Transverse colon (tissue), 4 donors: ENCODE measurements at regions of chr17 and their contacts with region 1.

Region 1: DNA sequence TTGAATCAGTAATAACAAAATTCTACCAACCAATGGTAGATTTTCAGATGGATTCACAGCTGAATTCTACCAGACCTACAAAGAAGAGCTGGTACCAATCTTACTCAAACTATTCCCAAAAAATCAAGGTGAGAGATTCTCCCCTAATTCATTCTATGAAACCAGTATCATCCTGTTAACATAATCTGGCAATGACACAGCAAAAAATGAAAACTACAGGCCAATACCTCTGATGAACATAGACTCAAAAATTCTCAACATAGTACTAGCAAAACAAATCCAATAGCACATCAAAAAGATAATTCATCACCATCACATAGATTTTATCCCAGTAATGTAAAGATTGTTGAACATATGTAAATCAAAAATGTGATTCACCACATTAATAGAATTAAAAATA is 234.4 kb upstream of the KIF2B start:
- DNase-seq: no peak
- H3K4me3 ChIP-seq: no peak overlapping the region
- H3K27ac ChIP-seq: no peak overlapping the region
- H3K4me1 ChIP-seq: no peaks in the 10 kb centered on the region
- H3K27me3 ChIP-seq: no peaks in the 10 kb centered on the region
- CTCF ChIP-seq: no peak
- EP300 ChIP-seq: no peak
- POLR2A ChIP-seq: no peak

Region 2: GRCh38 chr17:53127331-53127730 is 461.0 kb before region 1 on chr17:
- in situ Hi-C with region 1: no loop called
- intact Hi-C with region 1: no loop called
- DNase-seq: no peak
- H3K4me3 ChIP-seq: no peak overlapping the region
- H3K27ac ChIP-seq: no peak overlapping the region
- H3K4me1 ChIP-seq: no peaks in the 10 kb centered on the region
- H3K27me3 ChIP-seq: no peaks in the 10 kb centered on the region
- CTCF ChIP-seq: no peak
- EP300 ChIP-seq: no peak
- POLR2A ChIP-seq: no peak

Region 3: DNA sequence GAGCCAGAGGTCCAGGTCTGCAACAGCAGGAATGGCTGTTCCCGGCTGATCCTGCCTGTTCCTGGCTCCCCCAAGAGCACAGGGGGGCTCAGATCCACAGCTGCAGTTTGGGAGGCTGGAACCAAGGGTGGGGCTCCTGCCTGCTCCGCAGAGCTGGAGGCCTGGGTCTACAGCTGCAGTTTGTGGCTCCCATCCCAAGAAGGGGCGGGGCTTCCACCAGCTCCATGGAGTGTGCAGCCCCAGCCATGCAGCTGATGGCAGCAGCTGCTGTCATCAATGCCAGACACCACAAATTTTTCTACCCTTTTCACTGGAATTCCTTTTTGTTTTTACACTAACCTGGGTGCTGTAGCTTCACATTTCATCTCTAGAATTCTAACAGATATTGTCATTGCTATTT is 99.0 kb after region 1 on chr17:
- in situ Hi-C with region 1: loop called in 1 of 4 experiments (anchors 25 kb)
- intact Hi-C with region 1: no loop called
- DNase-seq: no peak
- H3K4me3 ChIP-seq: no peak overlapping the region
- H3K27ac ChIP-seq: no peak overlapping the region
- H3K4me1 ChIP-seq: no peaks in the 10 kb centered on the region
- H3K27me3 ChIP-seq: no peaks in the 10 kb centered on the region
- CTCF ChIP-seq: no peak
- EP300 ChIP-seq: no peak
- POLR2A ChIP-seq: no peak